ENCODE measurements at regions of chr12 and their contacts with region 1.

Region 1: GRCh38 chr12:98532681-98533304 is 17.4 kb downstream of the TMPO start:
- DNase-seq: no peak
- ATAC-seq: peak; percentile 76
- H3K4me3 ChIP-seq: no peak overlapping the region
- H3K27ac ChIP-seq: no peak overlapping the region
- H3K4me1 ChIP-seq: no peaks in the 10 kb centered on the region
- H3K27me3 ChIP-seq: no peaks in the 10 kb centered on the region
- CTCF ChIP-seq: peak; percentile 47 to 48 (median 48)
- EP300 ChIP-seq: no peak
- POLR2A ChIP-seq: no peak
- RAD21 ChIP-seq: peak; percentile 25; the same call in 1 of the 2 replicates

Region 2: DNA sequence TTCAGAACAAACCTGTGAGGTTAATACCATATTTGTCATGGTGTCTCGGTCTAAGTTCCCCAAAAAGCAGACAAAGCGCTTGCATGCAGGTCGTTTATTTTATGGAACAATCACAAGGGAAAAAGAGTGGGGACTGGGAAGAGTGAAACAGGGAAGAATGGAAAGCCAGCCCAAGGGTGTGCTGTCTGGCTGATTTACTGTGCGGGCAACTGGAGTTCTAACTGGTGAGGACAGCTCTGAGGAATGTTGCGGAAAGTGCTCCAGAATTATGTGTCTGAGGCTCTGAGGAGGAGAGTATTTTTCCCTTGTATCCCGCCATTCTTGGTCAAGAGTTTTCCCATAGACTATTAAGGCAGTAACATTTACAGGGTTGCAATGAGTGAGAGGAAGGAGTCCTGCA is 604.8 kb before region 1 on chr12:
- CTCF ChIA-PET with region 1: no interaction called
- POLR2A ChIA-PET with region 1: no interaction called
- RAD21 ChIA-PET with region 1: no interaction called
- SMC1A ChIA-PET with region 1: no interaction called
- in situ Hi-C with region 1: no loop called
- intact Hi-C with region 1: no loop called
- DNase-seq: no peak
- ATAC-seq: no peak
- H3K4me3 ChIP-seq: no peak overlapping the region
- H3K27ac ChIP-seq: no peak overlapping the region
- H3K4me1 ChIP-seq: no peaks in the 10 kb centered on the region
- H3K27me3 ChIP-seq: no peaks in the 10 kb centered on the region
- CTCF ChIP-seq: no peak
- EP300 ChIP-seq: no peak
- POLR2A ChIP-seq: no peak
- RAD21 ChIP-seq: no peak

Region 3: DNA sequence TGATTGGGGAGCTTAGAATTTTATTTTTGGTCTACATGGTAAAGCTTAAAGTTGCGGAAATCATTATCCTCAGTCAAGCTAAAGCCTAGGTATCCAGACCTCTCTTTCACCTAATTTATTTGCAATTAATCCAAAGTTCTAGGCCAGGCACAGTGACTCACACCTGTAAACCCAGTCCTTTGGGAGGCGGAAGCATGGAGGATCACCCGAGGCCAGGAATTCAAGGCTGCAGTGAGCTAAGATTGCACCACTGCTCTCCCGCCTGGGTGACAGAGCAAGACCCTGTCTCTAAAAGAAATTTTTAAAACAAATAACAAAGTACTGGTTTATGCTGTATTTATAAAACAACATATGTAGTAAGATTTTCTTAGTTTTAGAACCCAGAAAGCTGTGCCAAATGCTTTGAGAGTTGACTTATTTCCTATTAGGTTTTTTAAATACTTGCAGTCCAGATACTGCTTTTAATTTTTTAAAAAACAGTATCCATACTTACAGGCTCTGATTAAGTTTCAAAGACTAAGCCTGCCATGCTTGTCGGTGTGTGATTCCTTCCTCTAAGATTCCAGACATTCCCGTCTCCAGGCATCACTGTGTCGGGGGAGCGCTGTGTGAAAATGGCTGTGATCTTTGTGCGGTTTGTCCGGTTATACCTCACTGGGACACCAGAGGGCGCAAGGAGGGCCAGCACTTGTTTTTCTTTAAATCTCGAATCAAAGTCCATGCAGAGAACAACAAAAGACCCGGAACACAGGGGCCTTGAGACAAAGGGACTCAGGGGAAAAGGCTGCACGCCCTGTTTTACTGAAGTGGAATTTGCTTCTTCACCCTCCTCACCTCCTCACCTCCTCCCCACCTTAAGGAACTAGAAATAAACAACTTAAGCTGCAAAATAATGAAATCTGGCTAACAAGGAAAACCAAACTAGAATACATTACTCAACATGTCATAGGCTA is 42.0 kb before region 1 on chr12:
- CTCF ChIA-PET with region 1: interaction called, 39 read pairs
- POLR2A ChIA-PET with region 1: no interaction called
- RAD21 ChIA-PET with region 1: interaction called, 3 read pairs
- SMC1A ChIA-PET with region 1: interaction called, 3 read pairs
- in situ Hi-C with region 1: no loop called
- intact Hi-C with region 1: loop called (anchors 1 kb)
- DNase-seq: peak; percentile 64
- ATAC-seq: peak; percentile 95
- H3K4me3 ChIP-seq: no peak overlapping the region
- H3K27ac ChIP-seq: peak overlapping the region; percentile 32
- H3K4me1 ChIP-seq: peaks cover 3% of the 10 kb centered on the region; the same call in 1 of the 2 replicates
- H3K27me3 ChIP-seq: no peaks in the 10 kb centered on the region; a peak in 1 of 4 replicates
- CTCF ChIP-seq: peak; percentile 82 to 89 (median 85)
- EP300 ChIP-seq: no peak
- POLR2A ChIP-seq: peak; percentile 54; the same call in 1 of the 2 replicates
- RAD21 ChIP-seq: peak; percentile 73

Region 4: DNA sequence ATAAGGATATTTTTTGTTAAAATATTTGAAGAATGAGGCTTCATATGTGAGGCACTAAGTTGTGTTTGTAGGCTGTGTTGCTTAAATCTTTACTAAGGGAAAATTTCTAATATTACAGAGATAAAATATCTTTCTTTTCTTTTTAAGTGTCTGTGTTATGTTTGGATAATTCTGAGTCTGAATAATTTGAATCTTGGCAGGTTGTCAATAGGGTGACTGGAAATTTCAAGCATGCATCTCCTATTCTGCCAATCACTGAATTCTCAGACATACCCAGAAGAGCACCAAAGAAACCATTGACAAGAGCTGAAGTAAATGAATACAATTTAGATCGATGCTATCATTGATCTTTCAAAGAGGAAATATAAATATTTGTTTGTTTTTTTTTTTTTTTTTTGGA is 12.0 kb after region 1 on chr12:
- CTCF ChIA-PET with region 1: interaction called, 22 read pairs
- POLR2A ChIA-PET with region 1: interaction called, 3 read pairs
- RAD21 ChIA-PET with region 1: interaction called, 4 read pairs
- SMC1A ChIA-PET with region 1: interaction called, 5 read pairs
- in situ Hi-C with region 1: no loop called
- intact Hi-C with region 1: no loop called
- DNase-seq: no peak
- ATAC-seq: no peak
- H3K4me3 ChIP-seq: no peak overlapping the region
- H3K27ac ChIP-seq: no peak overlapping the region
- H3K4me1 ChIP-seq: no peaks in the 10 kb centered on the region
- H3K27me3 ChIP-seq: no peaks in the 10 kb centered on the region
- CTCF ChIP-seq: no peak
- EP300 ChIP-seq: no peak
- POLR2A ChIP-seq: no peak
- RAD21 ChIP-seq: no peak

Region 5: DNA sequence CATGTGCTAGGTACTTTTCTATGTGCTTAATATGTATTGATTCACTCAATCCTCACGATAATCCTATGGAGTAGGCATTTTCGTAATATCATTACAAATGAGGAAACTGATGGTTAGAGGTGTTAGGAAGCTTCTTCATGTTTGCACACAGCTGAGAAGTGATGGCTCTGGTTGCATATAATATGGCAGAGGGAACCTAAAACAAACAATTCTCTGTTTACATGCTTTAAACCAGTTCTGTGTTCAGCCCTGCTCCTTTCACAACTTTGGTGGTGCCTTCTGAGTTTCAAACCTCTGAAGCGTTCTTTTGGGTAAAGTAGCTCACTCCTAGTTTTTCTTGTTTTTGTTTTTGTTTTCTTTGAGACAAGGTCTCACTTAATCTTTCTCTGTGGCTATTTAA is 18.0 kb after region 1 on chr12:
- CTCF ChIA-PET with region 1: interaction called, 22 read pairs
- POLR2A ChIA-PET with region 1: no interaction called
- RAD21 ChIA-PET with region 1: no interaction called
- SMC1A ChIA-PET with region 1: no interaction called
- in situ Hi-C with region 1: no loop called
- intact Hi-C with region 1: no loop called
- DNase-seq: no peak
- ATAC-seq: no peak
- H3K4me3 ChIP-seq: no peak overlapping the region
- H3K27ac ChIP-seq: no peak overlapping the region
- H3K4me1 ChIP-seq: no peaks in the 10 kb centered on the region
- H3K27me3 ChIP-seq: no peaks in the 10 kb centered on the region
- CTCF ChIP-seq: no peak
- EP300 ChIP-seq: no peak
- POLR2A ChIP-seq: no peak
- RAD21 ChIP-seq: no peak